PC-9 (cell line): ENCODE measurements at regions of chr10 and their contacts with region 1.

Region 1: GRCh38 chr10:4344511-4344994 is 481.5 kb upstream of the AKR1E2 start:
- DNase-seq: peak; percentile 87 to 97
- H3K4me3 ChIP-seq: peak overlapping the region; percentile 16; the same call in 1 of the 2 replicates
- H3K27ac ChIP-seq: peak overlapping the region; percentile 93
- H3K4me1 ChIP-seq: peaks cover 23% of the 10 kb centered on the region
- H3K27me3 ChIP-seq: no peaks in the 10 kb centered on the region
- CTCF ChIP-seq: no peak

Region 2: DNA sequence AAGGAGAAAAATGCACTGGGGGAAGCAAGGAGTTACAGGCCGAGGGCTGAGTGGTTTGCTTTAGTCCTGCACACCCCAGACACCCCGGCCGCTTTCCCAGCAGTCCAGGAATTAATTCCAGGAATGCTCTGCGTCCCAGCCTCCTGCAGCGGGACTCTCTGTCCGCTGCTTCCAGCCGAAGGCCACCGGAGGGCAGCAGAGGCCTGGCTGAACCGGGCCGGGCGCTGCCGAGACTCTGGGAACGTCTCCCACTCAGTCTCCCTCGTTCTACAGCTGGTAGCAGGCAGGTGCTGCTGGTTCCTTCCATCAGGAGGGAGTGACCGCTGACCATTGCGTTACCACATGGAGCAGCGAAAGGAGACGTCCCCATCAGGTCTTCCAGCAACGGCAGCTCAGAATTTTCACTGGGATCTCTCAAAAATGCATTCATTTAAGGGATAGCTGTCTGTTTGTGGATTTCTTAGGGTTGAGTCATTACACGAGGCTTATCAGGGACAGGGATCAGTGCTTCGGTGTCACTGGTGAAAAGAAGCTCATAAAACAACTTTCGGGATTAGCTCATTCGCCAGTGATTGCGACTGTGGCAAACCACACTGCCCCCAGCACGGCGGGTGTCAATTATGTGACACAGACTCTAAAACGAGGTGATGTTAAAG is 1147.1 kb before region 1 on chr10:
- CTCF ChIA-PET with region 1: no interaction called
- POLR2A ChIA-PET with region 1: interaction called, 8 read pairs
- intact Hi-C with region 1: loop called (anchors 10 kb)
- DNase-seq: peak; percentile 85 to 86
- H3K4me3 ChIP-seq: peak overlapping the region; percentile 53; the same call in 1 of the 2 replicates
- H3K27ac ChIP-seq: peak overlapping the region; percentile 79
- H3K4me1 ChIP-seq: peaks cover 10% of the 10 kb centered on the region
- H3K27me3 ChIP-seq: no peaks in the 10 kb centered on the region
- CTCF ChIP-seq: peak; percentile 79

Region 3: DNA sequence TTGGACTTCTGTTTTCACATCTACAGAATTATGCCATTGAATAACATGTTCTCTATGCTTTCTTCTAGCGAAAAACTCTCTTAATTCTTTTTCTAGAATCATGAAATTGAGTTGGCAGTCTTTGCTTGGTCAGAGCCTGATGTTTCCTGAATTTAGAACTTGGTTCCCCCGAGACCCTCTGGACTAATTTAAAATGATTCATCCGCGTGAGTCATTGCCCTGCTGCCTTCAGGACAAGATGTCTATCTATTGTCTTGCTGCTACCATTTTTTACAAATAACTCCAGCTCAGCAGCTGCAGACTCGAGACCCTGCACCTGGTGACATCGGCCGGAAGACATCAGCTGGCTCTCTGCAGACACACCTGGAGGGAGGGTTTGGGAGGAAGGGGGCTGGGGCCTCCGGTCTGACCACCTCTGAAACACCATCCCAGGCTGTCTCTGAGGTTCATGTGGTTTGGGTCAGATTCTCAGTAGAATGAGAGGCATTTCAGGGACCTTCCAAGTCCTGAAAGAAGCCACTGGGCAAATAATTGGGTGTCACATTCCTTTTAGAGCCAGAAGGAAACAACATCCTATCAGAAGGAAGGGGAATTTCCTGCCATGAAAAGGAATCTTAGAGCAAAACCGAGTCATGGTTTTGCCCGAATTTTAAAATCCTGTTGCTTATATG is 538.6 kb before region 1 on chr10:
- CTCF ChIA-PET with region 1: no interaction called
- POLR2A ChIA-PET with region 1: no interaction called
- intact Hi-C with region 1: loop called (anchors 5 kb)
- DNase-seq: peak; percentile 79 to 83
- H3K4me3 ChIP-seq: peak overlapping the region; percentile 25; the same call in 1 of the 2 replicates
- H3K27ac ChIP-seq: peak overlapping the region; percentile 96
- H3K4me1 ChIP-seq: peaks cover 66% of the 10 kb centered on the region
- H3K27me3 ChIP-seq: no peaks in the 10 kb centered on the region
- CTCF ChIP-seq: no peak

Region 4: DNA sequence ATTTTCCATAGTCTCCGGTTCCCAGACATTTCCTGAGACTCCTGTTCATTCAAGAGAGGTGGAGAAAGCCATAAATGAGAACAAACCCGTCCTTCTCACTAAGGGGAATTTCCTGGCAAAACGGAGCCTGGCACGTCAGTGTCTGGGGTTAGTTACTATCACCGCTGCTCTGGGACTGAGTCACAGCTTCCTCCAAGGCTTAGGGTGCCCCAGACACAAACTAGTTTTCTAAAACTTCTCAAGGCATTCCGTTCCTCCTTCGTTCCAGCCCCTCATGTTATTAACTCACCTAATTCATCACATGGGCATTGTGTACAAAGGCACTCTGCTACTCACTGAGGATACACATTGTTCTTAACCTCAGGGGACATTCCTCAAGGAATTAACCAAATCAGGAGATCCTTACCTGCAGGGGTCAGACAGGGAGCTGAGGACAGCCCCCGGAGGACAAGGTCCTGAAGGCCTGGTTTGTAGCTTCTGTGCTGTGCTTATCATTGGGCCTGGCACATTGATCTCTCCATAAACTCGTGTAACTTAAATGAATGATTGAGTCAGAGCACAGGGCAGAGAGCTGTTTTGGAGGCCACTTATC is 456.6 kb before region 1 on chr10:
- CTCF ChIA-PET with region 1: no interaction called
- POLR2A ChIA-PET with region 1: no interaction called
- intact Hi-C with region 1: loop called (anchors 5 kb)
- DNase-seq: peak; percentile 50 to 89
- H3K4me3 ChIP-seq: no peak overlapping the region
- H3K27ac ChIP-seq: peak overlapping the region; percentile 90
- H3K4me1 ChIP-seq: peaks cover 41% of the 10 kb centered on the region
- H3K27me3 ChIP-seq: no peaks in the 10 kb centered on the region
- CTCF ChIP-seq: no peak

Region 5: GRCh38 chr10:4136121-4136520 is 208.4 kb before region 1 on chr10:
- CTCF ChIA-PET with region 1: no interaction called
- POLR2A ChIA-PET with region 1: no interaction called
- intact Hi-C with region 1: no loop called
- DNase-seq: no peak
- H3K4me3 ChIP-seq: no peak overlapping the region
- H3K27ac ChIP-seq: no peak overlapping the region
- H3K4me1 ChIP-seq: peaks cover 13% of the 10 kb centered on the region
- H3K27me3 ChIP-seq: no peaks in the 10 kb centered on the region
- CTCF ChIP-seq: no peak

Region 6: GRCh38 chr10:4241724-4242345 is 102.7 kb before region 1 on chr10:
- CTCF ChIA-PET with region 1: interaction called, 3 read pairs
- POLR2A ChIA-PET with region 1: no interaction called
- intact Hi-C with region 1: loop called (anchors 5 kb)
- DNase-seq: peak in 1 of 2 experiments; percentile 27
- H3K4me3 ChIP-seq: no peak overlapping the region
- H3K27ac ChIP-seq: no peak overlapping the region
- H3K4me1 ChIP-seq: peaks cover 22% of the 10 kb centered on the region
- H3K27me3 ChIP-seq: no peaks in the 10 kb centered on the region
- CTCF ChIP-seq: no peak

Region 7: DNA sequence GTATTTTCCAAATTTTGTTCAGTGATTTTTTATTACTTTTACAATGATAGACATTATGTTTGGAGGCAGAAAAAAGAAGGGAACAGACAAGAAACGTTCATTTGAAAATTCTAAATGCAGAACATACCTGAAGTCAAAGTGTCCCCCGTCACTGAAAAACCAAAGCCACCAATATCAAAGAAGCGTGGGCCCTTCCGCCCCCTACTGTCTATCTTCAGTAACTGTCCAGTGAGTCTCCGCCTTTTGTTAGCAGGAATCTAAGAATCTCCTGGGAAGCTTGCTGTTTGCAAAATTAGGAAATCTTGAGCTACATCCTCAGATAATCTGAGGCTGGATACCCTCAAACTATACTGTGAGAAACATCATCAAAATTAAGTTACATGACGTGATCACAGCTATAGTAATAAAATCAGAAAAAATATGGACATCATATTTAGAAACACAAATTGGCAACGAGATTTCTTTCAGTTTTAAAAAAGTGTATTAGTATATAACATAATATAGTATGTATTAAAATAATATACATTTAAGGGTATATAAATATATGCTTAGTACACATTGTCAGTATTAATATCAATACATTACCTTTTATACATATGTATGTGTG is 312.1 kb after region 1 on chr10:
- CTCF ChIA-PET with region 1: no interaction called
- POLR2A ChIA-PET with region 1: interaction called, 11 read pairs
- intact Hi-C with region 1: loop called (anchors 5 kb)
- DNase-seq: peak; percentile 30 to 41
- H3K4me3 ChIP-seq: no peak overlapping the region
- H3K27ac ChIP-seq: no peak overlapping the region
- H3K4me1 ChIP-seq: no peaks in the 10 kb centered on the region
- H3K27me3 ChIP-seq: no peaks in the 10 kb centered on the region
- CTCF ChIP-seq: peak; percentile 75

Region 8: GRCh38 chr10:4670737-4671136 is 326.2 kb after region 1 on chr10:
- CTCF ChIA-PET with region 1: no interaction called
- POLR2A ChIA-PET with region 1: no interaction called
- intact Hi-C with region 1: no loop called
- DNase-seq: no peak
- H3K4me3 ChIP-seq: no peak overlapping the region
- H3K27ac ChIP-seq: no peak overlapping the region
- H3K4me1 ChIP-seq: no peaks in the 10 kb centered on the region
- H3K27me3 ChIP-seq: no peaks in the 10 kb centered on the region
- CTCF ChIP-seq: no peak